B cell (primary cell): ENCODE measurements at regions of chr5 and their contacts with region 1.

Region 1: GRCh38 chr5:179732417-179732917 is at the start of gene MAML1:
- DNase-seq: peak; percentile 100
- ATAC-seq: peak; percentile 94
- H3K4me3 ChIP-seq: peak within 1 kb of the TSS; percentile 61 to 93 (median 74)
- H3K4me3 Mint-ChIP-seq: peak within 1 kb of the TSS; percentile 89
- H3K27ac ChIP-seq: peak within 1 kb of the TSS; percentile 50 to 89
- H3K27ac Mint-ChIP-seq: peak within 1 kb of the TSS; percentile 95
- H3K4me1 ChIP-seq: peaks cover 19 to 23% of the 10 kb centered on the region in 2 donors
- H3K4me1 Mint-ChIP-seq: peaks cover 36% of the 10 kb centered on the region
- H3K27me3 ChIP-seq: no peaks in the 10 kb centered on the region
- H3K27me3 Mint-ChIP-seq: no peaks in the 10 kb centered on the region
- CTCF ChIP-seq: no peak
- total RNA-seq, gene MAML1: 50.6 and 57.6 TPM in 2 replicates

Region 2: DNA sequence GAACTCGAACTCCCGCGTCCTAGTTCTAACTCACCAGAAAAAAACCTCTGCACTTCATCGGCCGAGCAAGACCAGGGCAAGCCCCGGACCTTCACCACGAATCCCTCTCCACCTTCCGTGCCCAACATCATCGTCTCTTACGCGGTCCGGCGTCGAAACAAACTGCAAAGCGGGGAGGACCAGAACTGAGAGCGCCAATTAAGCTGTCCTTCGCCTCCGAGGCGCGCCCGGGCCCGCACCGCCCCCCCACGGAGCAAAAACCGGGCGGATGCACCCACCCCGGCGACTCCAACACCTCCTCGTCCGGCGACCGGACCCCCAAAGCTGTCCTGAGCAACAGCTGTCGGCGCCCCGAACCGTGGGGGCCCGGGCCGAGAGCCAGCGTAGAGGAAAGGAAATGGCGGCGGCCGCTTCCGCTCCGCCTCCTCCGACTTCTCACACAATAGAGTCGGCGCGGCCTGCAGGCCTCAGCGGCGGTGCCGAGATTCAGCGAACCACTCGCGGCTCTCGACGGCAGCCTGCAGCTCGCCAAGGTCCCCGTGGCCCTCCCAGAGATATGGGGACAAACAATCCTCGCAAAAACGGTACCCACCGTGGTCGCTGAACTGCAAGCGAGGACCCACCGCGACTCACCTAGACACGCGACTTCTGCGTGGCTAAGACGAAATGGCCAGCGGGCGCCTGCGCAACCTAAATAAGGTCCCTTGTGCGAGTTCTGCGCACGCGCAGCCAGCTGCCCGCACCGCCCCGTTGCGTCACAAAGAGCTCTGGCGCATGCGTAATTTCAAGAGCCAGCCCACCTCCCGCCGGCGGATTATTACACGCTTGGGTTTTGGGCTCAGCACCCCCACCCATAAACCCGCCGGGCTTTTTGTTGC is 109.2 kb before region 1 on chr5 and contains the start of gene HNRNPH1:
- CTCF ChIA-PET with region 1: interaction called, 6 read pairs
- POLR2A ChIA-PET with region 1: interaction called, 6 read pairs
- intact Hi-C with region 1: loop called (anchors 2 kb)
- DNase-seq: peak; percentile 99
- ATAC-seq: peak; percentile 74
- H3K4me3 ChIP-seq: peak within 1 kb of the TSS; percentile 78 to 96 (median 93)
- H3K4me3 Mint-ChIP-seq: peak within 1 kb of the TSS; percentile 98
- H3K27ac ChIP-seq: peak within 1 kb of the TSS; percentile 98 to 99
- H3K27ac Mint-ChIP-seq: peak within 1 kb of the TSS; percentile 99
- H3K4me1 ChIP-seq: peaks cover 39 to 45% of the 10 kb centered on the region in 2 donors
- H3K4me1 Mint-ChIP-seq: peaks cover 48% of the 10 kb centered on the region
- H3K27me3 ChIP-seq: no peaks in the 10 kb centered on the region
- H3K27me3 Mint-ChIP-seq: no peaks in the 10 kb centered on the region
- CTCF ChIP-seq: no peak
- total RNA-seq, gene HNRNPH1: 1,364 and 1,412 TPM in 2 replicates

Region 3: DNA sequence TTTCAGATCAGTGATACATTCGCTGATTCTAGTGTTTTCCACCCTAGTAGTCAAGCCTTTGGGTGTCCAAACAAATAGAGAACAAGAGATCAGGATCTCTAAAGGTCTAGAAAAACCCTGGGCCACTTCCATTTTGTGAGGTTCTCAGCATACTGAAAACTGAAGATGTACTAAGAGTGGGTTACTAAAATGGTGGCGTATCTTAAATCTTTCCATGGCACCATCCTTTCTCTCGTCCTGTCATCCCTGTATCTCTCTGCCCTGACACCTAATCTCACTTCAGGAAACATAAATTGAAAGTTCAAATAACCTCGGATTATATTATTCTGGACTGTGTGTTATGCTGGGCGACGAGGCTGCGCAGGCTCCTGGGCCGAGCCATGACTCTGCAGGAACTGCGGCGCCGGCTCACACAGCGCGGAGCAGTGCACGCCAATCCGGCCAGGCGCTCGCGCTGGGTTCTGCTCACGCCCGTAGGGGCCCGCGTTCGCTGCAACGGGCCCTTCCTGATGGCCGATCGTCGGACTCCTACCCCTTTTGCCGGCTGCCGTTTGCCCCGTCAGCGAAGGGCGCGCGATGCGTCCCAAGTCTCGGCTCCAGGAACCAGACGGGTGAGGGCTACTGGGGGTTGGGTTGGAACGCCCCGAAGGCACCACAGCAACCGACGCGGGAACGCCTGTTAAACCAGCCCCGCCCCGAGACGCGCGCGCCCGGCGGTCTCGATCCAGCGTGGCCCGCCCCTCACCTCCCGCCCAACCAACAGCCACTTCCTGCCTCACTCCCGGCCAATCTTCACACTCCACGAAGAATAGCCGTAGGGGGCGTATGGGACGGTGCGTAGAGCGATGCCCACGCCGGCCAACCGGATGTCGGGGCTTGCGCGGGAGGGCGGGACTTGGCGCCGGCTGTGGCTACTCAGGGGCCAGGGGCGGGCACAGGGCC is 34.2 kb before region 1 on chr5:
- CTCF ChIA-PET with region 1: interaction called, 4 read pairs
- POLR2A ChIA-PET with region 1: interaction called, 3 read pairs
- intact Hi-C with region 1: loop called (anchors 1 kb)
- DNase-seq: peak; percentile 99
- ATAC-seq: peak; percentile 90
- H3K4me3 ChIP-seq: peak overlapping the region; percentile 65 to 95 (median 90)
- H3K4me3 Mint-ChIP-seq: peak overlapping the region; percentile 99
- H3K27ac ChIP-seq: peak overlapping the region; percentile 92 to 98
- H3K27ac Mint-ChIP-seq: peak overlapping the region; percentile 99
- H3K4me1 ChIP-seq: peaks cover 16 to 27% of the 10 kb centered on the region in 2 donors
- H3K4me1 Mint-ChIP-seq: peaks cover 30% of the 10 kb centered on the region
- H3K27me3 ChIP-seq: no peaks in the 10 kb centered on the region
- H3K27me3 Mint-ChIP-seq: no peaks in the 10 kb centered on the region
- CTCF ChIP-seq: no peak

Region 4: DNA sequence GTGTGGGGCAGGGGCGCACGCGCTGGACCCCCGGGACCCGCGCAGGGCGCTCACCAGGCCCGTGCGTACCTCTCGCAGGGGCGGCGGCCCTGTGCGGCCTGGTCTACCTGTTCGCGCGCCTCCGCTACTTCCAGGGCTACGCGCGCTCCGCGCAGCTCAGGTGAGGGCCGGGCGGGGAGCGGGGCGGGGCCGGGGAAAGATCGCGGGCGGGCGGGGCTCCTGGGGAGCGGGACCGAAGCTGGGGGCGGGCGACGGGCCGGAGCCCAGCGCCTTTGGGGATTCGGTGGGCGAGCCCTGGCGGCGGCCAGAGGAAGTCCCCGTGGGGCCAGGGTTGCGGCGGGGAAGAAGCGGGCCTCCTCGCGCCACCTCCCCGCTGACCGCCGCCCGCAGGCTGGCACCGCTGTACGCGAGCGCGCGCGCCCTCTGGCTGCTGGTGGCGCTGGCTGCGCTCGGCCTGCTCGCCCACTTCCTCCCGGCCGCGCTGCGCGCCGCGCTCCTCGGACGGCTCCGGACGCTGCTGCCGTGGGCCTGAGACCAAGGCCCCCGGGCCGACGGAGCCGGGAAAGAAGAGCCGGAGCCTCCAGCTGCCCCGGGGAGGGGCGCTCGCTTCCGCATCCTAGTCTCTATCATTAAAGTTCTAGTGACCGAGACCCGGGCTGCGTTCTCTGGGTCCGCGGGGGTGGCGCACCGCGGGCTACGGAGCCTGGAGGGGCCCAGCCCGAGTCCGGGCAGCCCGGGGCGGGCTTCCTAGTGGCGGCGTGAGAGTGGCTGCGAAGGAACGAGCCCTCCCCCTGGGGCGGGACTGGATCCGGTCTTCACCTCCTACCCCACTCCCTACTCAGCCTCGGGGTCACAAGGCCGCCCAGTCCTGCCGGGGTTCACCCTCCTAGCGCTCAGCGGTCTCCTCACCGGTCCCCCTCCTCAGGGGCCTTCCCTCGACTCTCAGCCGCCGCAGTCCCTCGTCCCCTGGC is 63.7 kb after region 1 on chr5:
- CTCF ChIA-PET with region 1: interaction called, 4 read pairs
- POLR2A ChIA-PET with region 1: interaction called, 3 read pairs
- intact Hi-C with region 1: loop called (anchors 1 kb)
- DNase-seq: peak; percentile 86
- ATAC-seq: peak; percentile 79
- H3K4me3 ChIP-seq: peak overlapping the region; percentile 5 to 68 (median 63)
- H3K4me3 Mint-ChIP-seq: peak overlapping the region; percentile 70
- H3K27ac ChIP-seq: peak overlapping the region; percentile 41 to 66
- H3K27ac Mint-ChIP-seq: peak overlapping the region; percentile 70
- H3K4me1 ChIP-seq: peaks cover 28 to 32% of the 10 kb centered on the region in 2 donors
- H3K4me1 Mint-ChIP-seq: peaks cover 29% of the 10 kb centered on the region
- H3K27me3 ChIP-seq: no peaks in the 10 kb centered on the region
- H3K27me3 Mint-ChIP-seq: no peaks in the 10 kb centered on the region
- CTCF ChIP-seq: peak; percentile 75

Region 5: DNA sequence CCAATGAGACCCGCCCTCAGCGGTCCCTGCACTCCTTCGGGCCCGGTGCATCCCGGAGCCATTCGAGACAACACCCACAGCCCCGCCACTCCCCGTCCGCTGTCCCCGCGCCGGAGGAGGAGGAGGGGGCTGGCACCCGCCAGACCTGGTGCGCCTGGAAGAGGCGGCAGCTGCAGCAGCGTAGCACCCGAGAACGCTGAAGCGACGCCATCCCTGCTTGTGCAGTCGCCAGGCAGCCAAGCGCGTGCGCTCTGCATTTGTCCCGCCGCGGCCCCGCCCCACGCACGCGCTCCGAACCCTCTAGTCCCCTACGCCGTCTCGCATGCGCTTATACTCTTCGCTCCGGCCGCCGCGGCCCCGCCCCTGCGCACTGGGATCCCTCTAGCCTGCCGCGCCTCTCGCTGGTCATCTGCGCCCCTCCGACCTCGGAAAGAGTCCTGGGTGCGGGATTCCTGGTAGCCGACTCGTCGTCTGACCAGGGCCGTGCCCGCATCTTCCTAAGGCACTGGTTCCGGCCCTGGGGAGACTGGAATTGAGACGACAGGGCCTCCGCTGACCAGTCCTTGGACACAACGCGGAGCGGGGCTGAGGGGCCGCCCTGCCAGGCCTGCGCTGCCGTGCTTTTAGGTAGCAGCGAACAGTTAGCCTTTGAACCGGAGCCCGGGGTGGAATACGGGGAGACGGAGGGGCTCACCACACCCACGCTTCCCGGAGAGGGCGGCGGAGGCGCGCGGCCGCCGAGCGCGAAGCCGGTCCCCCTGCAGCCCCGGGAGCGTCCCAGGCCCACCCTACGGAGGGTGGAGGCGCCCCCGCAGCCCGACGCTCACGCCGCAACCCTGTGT is 126.3 kb after region 1 on chr5 and contains the start of gene MRNIP:
- CTCF ChIA-PET with region 1: no interaction called
- POLR2A ChIA-PET with region 1: no interaction called
- intact Hi-C with region 1: loop called (anchors 1 kb)
- DNase-seq: peak; percentile 93
- ATAC-seq: peak; percentile 94
- H3K4me3 ChIP-seq: peak within 1 kb of the TSS; percentile 71 to 95 (median 90)
- H3K4me3 Mint-ChIP-seq: peak within 1 kb of the TSS; percentile 89
- H3K27ac ChIP-seq: peak within 1 kb of the TSS; percentile 63 to 80
- H3K27ac Mint-ChIP-seq: peak within 1 kb of the TSS; percentile 97
- H3K4me1 ChIP-seq: peaks cover 5 to 15% of the 10 kb centered on the region in 2 donors
- H3K4me1 Mint-ChIP-seq: peaks cover 31% of the 10 kb centered on the region
- H3K27me3 ChIP-seq: no peaks in the 10 kb centered on the region
- H3K27me3 Mint-ChIP-seq: no peaks in the 10 kb centered on the region
- CTCF ChIP-seq: no peak
- total RNA-seq, gene MRNIP: 152 and 160 TPM in 2 replicates

Region 6: GRCh38 chr5:179974946-179975712 is 242.7 kb after region 1 on chr5:
- CTCF ChIA-PET with region 1: no interaction called
- POLR2A ChIA-PET with region 1: no interaction called
- intact Hi-C with region 1: loop called (anchors 1 kb)
- DNase-seq: peak; percentile 84
- ATAC-seq: peak; percentile 83
- H3K4me3 ChIP-seq: no peak overlapping the region
- H3K4me3 Mint-ChIP-seq: peak overlapping the region; percentile 31
- H3K27ac ChIP-seq: peak overlapping the region; percentile 22 to 58
- H3K27ac Mint-ChIP-seq: peak overlapping the region; percentile 92
- H3K4me1 ChIP-seq: peaks cover 29 to 41% of the 10 kb centered on the region in 2 donors
- H3K4me1 Mint-ChIP-seq: peaks cover 49% of the 10 kb centered on the region
- H3K27me3 ChIP-seq: no peaks in the 10 kb centered on the region
- H3K27me3 Mint-ChIP-seq: no peaks in the 10 kb centered on the region
- CTCF ChIP-seq: peak; percentile 74

Region 7: GRCh38 chr5:180291943-180292831 is 559.7 kb after region 1 on chr5 and contains the start of gene MAPK9:
- CTCF ChIA-PET with region 1: no interaction called
- POLR2A ChIA-PET with region 1: no interaction called
- intact Hi-C with region 1: loop called (anchors 5 kb)
- DNase-seq: peak; percentile 90
- ATAC-seq: peak; percentile 79
- H3K4me3 ChIP-seq: peak within 1 kb of the TSS; percentile 21 to 90 (median 81)
- H3K4me3 Mint-ChIP-seq: peak within 1 kb of the TSS; percentile 92
- H3K27ac ChIP-seq: peak within 1 kb of the TSS; percentile 72 to 95
- H3K27ac Mint-ChIP-seq: peak within 1 kb of the TSS; percentile 94
- H3K4me1 ChIP-seq: peaks cover 32 to 38% of the 10 kb centered on the region in 2 donors
- H3K4me1 Mint-ChIP-seq: peaks cover 49% of the 10 kb centered on the region
- H3K27me3 ChIP-seq: no peaks in the 10 kb centered on the region
- H3K27me3 Mint-ChIP-seq: no peaks in the 10 kb centered on the region
- CTCF ChIP-seq: no peak
- total RNA-seq, gene MAPK9: 39.7 and 40.4 TPM in 2 replicates

Region 8: GRCh38 chr5:180366326-180366725 is 633.9 kb after region 1 on chr5:
- CTCF ChIA-PET with region 1: no interaction called
- POLR2A ChIA-PET with region 1: no interaction called
- intact Hi-C with region 1: no loop called
- DNase-seq: no peak
- ATAC-seq: no peak
- H3K4me3 ChIP-seq: no peak overlapping the region
- H3K4me3 Mint-ChIP-seq: no peak overlapping the region
- H3K27ac ChIP-seq: no peak overlapping the region
- H3K27ac Mint-ChIP-seq: no peak overlapping the region
- H3K4me1 ChIP-seq: no peaks in the 10 kb centered on the region
- H3K4me1 Mint-ChIP-seq: no peaks in the 10 kb centered on the region
- H3K27me3 ChIP-seq: peaks cover 0 to 5% (median 0%) of the 10 kb centered on the region in 4 experiments
- H3K27me3 Mint-ChIP-seq: peaks cover 3% of the 10 kb centered on the region
- CTCF ChIP-seq: no peak